GM10248 (cell line): ENCODE measurements at regions of chr10 and their contacts with region 1.

Region 1: GRCh38 chr10:102225646-102226541 is at the start of gene ELOVL3:
- DNase-seq: peak; percentile 94
- CTCF ChIP-seq: no peak

Region 2: DNA sequence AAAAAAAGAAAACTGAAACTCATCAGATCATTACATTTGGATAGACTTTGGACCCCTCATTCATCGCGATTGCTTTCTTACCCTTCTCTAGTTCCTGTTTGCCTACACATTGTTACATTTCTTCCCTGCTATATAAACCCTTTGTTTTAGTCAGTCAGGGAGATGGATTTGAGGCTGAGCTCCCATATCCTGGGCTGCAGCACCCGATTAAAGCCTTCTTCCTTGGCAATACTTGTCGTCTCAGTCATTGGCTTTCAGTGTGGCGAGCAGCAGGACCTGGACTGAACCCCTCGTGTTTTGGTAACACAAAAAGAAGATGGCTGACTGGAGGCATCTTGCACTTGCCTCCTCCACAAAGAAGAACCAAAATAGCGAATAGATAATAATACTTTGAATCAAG is 33.9 kb before region 1 on chr10:
- CTCF ChIA-PET with region 1: interaction called, 23 read pairs
- POLR2A ChIA-PET with region 1: no interaction called
- DNase-seq: no peak
- CTCF ChIP-seq: no peak

Region 3: DNA sequence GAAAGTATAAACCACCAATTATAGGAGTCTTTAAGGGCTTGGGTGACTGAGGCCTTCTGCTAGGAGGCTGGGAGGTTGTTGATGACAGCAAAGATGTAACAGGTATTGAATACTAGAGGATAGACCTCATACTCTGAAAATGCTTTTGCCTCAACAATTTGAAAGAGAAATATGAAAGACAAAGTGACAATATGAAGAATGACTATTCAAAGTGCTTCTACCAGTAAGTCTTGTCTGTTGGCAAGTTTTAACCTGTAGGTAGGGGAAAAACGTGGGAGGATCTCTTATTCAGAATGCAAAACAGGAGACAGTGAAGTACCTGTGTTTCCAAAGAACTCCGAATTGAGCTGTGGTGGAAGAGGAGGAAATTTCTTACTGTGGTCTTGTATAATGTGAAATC is 57.6 kb after region 1 on chr10:
- CTCF ChIA-PET with region 1: interaction called, 10 read pairs
- POLR2A ChIA-PET with region 1: no interaction called
- DNase-seq: no peak
- CTCF ChIP-seq: no peak

Region 4: DNA sequence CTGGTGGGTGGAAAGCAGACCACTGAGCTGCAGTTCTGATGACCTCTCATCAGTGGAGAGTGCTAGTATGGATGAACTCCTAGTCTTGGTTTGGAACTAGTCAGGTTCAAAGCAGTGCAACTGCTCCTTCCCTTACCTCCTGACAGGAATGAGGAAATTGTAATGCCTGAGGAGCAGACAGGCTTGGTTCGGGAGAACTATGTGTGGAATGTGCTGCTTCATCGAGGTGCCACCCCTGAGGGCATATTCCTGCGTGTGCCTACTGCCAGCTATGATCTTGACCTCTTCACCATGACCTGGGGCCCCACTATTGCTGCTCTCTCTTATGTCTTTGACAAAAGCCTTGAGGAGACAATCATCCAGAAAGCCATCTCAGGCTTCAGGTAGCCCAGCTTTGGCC is 142.2 kb after region 1 on chr10:
- CTCF ChIA-PET with region 1: interaction called, 17 read pairs
- POLR2A ChIA-PET with region 1: no interaction called
- DNase-seq: no peak
- CTCF ChIP-seq: no peak

Region 5: GRCh38 chr10:102420810-102421644 is 195.1 kb after region 1 on chr10 and contains the start of gene FBXL15:
- CTCF ChIA-PET with region 1: interaction called, 95 read pairs
- POLR2A ChIA-PET with region 1: no interaction called
- DNase-seq: peak; percentile 96
- CTCF ChIP-seq: no peak

Region 6: DNA sequence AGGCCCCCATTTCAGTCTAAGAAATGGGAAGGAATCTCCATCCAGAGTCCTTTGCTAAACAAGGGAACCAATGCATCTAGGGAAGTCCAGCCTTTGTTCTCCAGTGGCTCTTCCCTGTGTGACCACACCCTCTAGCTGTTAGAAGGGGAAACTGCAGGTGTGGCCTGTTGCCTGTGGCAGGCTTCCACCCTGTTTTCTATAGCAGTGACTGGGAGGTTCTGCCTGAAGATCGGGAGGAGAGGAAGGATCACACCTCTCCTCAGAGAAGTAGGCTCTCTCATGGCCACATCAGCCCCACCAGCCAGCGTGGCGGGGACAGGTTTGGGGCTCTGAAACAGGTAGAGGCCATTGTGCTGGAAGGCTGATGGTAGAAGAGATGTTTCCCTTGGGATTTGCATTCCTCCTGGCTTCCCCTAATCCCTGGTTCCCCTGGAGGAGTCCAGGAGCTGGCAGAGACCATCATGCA is 370.6 kb after region 1 on chr10:
- CTCF ChIA-PET with region 1: interaction called, 13 read pairs
- POLR2A ChIA-PET with region 1: no interaction called
- DNase-seq: peak; percentile 80
- CTCF ChIP-seq: peak; percentile 81

Region 7: GRCh38 chr10:102691285-102692066 is 465.6 kb after region 1 on chr10:
- CTCF ChIA-PET with region 1: no interaction called
- POLR2A ChIA-PET with region 1: no interaction called
- DNase-seq: no peak
- CTCF ChIP-seq: no peak

Region 8: GRCh38 chr10:102831322-102832071 is 605.6 kb after region 1 on chr10:
- CTCF ChIA-PET with region 1: no interaction called
- POLR2A ChIA-PET with region 1: no interaction called
- DNase-seq: no peak
- CTCF ChIP-seq: no peak